Caco-2 (cell line): ENCODE measurements at regions of chr5 and their contacts with region 1.

Region 1: DNA sequence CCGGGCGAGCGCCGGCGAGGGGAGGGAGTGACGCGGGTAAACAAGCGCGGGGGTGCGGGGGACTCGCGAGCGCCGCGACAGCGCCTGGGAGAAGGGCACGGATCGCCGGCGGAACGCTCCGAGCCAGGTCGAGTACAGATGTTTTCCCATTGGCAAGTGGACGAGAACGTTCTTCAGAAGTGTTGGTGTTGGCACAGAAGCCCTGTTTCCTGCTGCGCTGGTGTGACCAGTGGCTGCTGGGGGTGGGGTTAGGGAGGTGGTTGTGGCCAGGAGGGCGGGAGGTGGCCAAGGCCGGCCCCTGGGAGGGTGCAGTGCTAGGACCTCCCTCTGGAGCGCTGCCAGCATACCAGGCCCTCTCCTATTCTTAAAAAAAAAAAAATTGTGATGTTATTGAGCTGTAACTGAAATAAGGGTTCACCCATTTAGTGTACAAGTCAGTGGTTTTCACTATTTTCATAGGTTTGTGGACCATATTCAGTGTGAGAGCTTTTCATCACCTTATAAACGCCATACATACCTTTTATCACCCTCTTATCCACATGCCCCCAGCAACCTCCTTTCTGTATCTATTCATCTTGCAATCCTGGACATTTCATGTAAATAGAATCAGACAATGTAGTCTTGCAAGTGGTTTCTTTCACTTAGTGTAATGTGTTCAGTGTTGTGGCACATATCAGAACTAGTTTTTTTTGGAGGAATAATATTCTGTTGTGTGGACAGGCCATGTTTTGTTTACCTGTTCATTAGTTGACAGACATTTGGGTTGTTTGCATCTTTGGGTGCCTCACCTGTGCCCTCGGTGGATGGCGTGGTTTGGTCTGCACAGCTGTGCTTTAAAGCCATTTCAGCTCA is 1.1 kb downstream of the SQSTM1 start:
- DNase-seq: peak; percentile 90
- H3K4me3 ChIP-seq: peak overlapping the region; percentile 97
- H3K4me3 Mint-ChIP-seq: peak overlapping the region; percentile 88
- H3K27ac Mint-ChIP-seq: peak overlapping the region; percentile 89
- H3K4me1 ChIP-seq: peaks cover 59% of the 10 kb centered on the region
- H3K4me1 Mint-ChIP-seq: peaks cover 37% of the 10 kb centered on the region
- H3K27me3 ChIP-seq: no peaks in the 10 kb centered on the region
- H3K27me3 Mint-ChIP-seq: no peaks in the 10 kb centered on the region
- CTCF ChIP-seq: no peak

Region 2: GRCh38 chr5:178695556-178695955 is 1126.3 kb before region 1 on chr5:
- CTCF ChIA-PET with region 1: no interaction called
- POLR2A ChIA-PET with region 1: no interaction called
- intact Hi-C with region 1: no loop called
- DNase-seq: no peak
- H3K4me3 ChIP-seq: no peak overlapping the region
- H3K4me3 Mint-ChIP-seq: no peak overlapping the region
- H3K27ac Mint-ChIP-seq: no peak overlapping the region
- H3K4me1 ChIP-seq: no peaks in the 10 kb centered on the region
- H3K4me1 Mint-ChIP-seq: no peaks in the 10 kb centered on the region
- H3K27me3 ChIP-seq: no peaks in the 10 kb centered on the region
- H3K27me3 Mint-ChIP-seq: no peaks in the 10 kb centered on the region
- CTCF ChIP-seq: no peak

Region 3: DNA sequence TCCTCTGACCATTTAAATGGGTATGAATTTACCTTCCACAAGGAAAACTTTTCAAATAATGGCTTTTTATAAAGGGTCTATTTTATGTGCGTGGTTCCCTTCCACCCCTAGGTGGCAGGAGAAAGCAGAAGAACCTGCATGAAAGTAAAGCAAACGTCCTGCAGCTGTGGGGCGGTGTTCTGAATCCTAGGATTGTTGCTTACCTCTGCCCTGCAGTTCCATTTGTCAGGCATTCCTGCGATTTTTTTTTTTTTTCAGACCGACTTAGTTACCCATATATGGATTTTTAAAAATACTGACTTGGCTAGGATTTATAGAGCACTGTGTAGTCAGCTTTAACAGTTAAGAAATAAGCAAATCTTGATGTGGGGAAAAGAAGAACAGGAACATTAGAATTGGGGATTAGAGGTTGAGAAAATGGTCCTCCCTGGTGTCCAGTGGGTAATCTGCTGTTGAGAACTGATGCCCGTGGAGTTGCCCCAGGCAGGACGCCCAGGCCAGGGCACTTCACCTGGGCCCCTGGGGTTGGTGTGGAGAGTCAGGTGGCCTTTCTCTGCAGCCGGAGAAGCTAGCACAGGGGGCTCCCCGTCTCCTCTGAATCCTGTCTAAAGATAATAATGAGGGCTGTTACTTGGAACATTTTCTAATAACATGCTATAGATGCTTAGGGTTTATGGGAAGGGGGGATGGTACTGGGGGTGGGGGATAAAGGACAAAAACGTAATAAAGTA is 58.4 kb before region 1 on chr5:
- CTCF ChIA-PET with region 1: interaction called, 5 read pairs
- POLR2A ChIA-PET with region 1: no interaction called
- intact Hi-C with region 1: loop called (anchors 1 kb)
- DNase-seq: peak; percentile 82
- H3K4me3 ChIP-seq: no peak overlapping the region
- H3K4me3 Mint-ChIP-seq: no peak overlapping the region
- H3K27ac Mint-ChIP-seq: peak overlapping the region; percentile 81
- H3K4me1 ChIP-seq: peaks cover 12% of the 10 kb centered on the region
- H3K4me1 Mint-ChIP-seq: peaks cover 31% of the 10 kb centered on the region
- H3K27me3 ChIP-seq: no peaks in the 10 kb centered on the region
- H3K27me3 Mint-ChIP-seq: no peaks in the 10 kb centered on the region
- CTCF ChIP-seq: peak; percentile 84 to 96

Region 4: GRCh38 chr5:179806250-179807222 is 15.3 kb before region 1 on chr5 and contains the start of gene MGAT4B:
- CTCF ChIA-PET with region 1: interaction called, 3 read pairs
- POLR2A ChIA-PET with region 1: interaction called, 7 read pairs
- intact Hi-C with region 1: loop called (anchors 1 kb)
- DNase-seq: peak; percentile 71 to 86
- H3K4me3 ChIP-seq: peak within 1 kb of the TSS; percentile 97
- H3K4me3 Mint-ChIP-seq: peak within 1 kb of the TSS; percentile 72
- H3K27ac Mint-ChIP-seq: peak within 1 kb of the TSS; percentile 84
- H3K4me1 ChIP-seq: peaks cover 18% of the 10 kb centered on the region
- H3K4me1 Mint-ChIP-seq: peaks cover 13% of the 10 kb centered on the region
- H3K27me3 ChIP-seq: no peaks in the 10 kb centered on the region
- H3K27me3 Mint-ChIP-seq: no peaks in the 10 kb centered on the region
- CTCF ChIP-seq: no peak
- total RNA-seq, gene MGAT4B: 215 and 217 TPM in 2 replicates

Region 5: GRCh38 chr5:179858586-179859427 is 37.0 kb after region 1 on chr5 and contains the start of gene MRNIP:
- CTCF ChIA-PET with region 1: no interaction called
- POLR2A ChIA-PET with region 1: no interaction called
- intact Hi-C with region 1: loop called (anchors 2 kb)
- DNase-seq: peak; percentile 96 to 97
- H3K4me3 ChIP-seq: peak within 1 kb of the TSS; percentile 100
- H3K4me3 Mint-ChIP-seq: peak within 1 kb of the TSS; percentile 84
- H3K27ac Mint-ChIP-seq: peak within 1 kb of the TSS; percentile 87
- H3K4me1 ChIP-seq: no peaks in the 10 kb centered on the region
- H3K4me1 Mint-ChIP-seq: no peaks in the 10 kb centered on the region
- H3K27me3 ChIP-seq: no peaks in the 10 kb centered on the region
- H3K27me3 Mint-ChIP-seq: no peaks in the 10 kb centered on the region
- CTCF ChIP-seq: peak in 1 of 2 experiments; percentile 25
- total RNA-seq, gene MRNIP: 37.8 and 43.0 TPM in 2 replicates

Region 6: GRCh38 chr5:180040255-180041214 is 218.7 kb after region 1 on chr5:
- CTCF ChIA-PET with region 1: no interaction called
- POLR2A ChIA-PET with region 1: no interaction called
- intact Hi-C with region 1: no loop called
- DNase-seq: no peak
- H3K4me3 ChIP-seq: no peak overlapping the region
- H3K4me3 Mint-ChIP-seq: no peak overlapping the region
- H3K27ac Mint-ChIP-seq: no peak overlapping the region
- H3K4me1 ChIP-seq: no peaks in the 10 kb centered on the region
- H3K4me1 Mint-ChIP-seq: no peaks in the 10 kb centered on the region
- H3K27me3 ChIP-seq: no peaks in the 10 kb centered on the region
- H3K27me3 Mint-ChIP-seq: no peaks in the 10 kb centered on the region
- CTCF ChIP-seq: no peak